Activated CD4-positive, alpha-beta T cell treated with anti-CD3 and anti-CD28 coated beads, Interleukin-2, amount 10 ng/mL, durations not matched to agents 24 days and 14 days (primary cell): ENCODE measurements at regions of chr6 and their contacts with region 1.

Region 1: GRCh38 chr6:118283766-118284165 is 264.3 kb upstream of the PLN start:
- DNase-seq: peak; percentile 83
- H3K4me3 Mint-ChIP-seq: no peak overlapping the region
- H3K27ac Mint-ChIP-seq: no peak overlapping the region
- H3K4me1 Mint-ChIP-seq: peaks cover 2% of the 10 kb centered on the region
- H3K27me3 Mint-ChIP-seq: peaks cover 29% of the 10 kb centered on the region

Region 2: DNA sequence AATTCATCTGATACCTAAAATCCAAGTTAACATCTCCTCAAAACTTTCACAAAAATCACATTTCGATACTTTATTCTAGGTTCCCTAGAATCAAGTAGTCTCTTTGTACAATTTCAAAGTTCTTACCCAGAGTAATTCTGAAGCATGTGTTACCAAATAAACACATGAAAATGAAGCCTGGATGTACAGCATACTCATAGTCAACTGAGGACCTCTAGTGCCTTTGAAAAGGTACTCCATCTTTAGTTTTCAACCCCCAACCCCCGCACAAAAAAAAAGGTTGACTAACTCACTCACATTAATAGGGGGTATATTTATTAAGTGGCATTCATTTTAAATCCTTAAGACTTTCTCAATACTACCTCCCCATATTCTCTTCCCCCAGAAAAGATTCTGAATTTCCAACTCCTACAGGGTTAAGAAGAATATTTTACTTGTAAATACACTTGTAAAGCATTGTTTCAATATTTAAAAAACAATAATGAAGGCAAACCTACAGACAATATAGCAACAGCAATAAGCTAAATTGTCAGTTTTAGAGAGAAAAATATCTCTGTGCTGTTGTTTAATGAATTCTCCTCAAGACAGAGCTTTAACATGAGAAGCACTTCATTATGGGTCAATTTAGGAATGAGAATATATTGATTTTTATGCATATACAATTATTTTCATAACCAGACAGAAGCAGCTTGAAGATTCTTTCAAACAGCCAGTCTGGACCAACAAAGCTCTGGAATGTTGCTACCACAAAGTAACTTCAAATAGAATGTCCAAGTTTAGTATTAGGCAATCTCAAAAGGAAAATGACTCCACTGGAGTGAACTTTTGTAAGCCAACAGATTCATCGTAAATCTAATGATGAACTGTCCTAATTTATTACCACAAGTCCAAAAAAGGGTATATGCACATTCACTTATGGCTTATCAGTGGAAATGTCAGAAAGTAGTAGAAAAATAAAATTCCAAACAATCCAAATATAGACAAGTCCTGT is 267.6 kb after region 1 on chr6:
- intact Hi-C with region 1: loop called (anchors 1 kb)
- DNase-seq: peak; percentile 72
- H3K4me3 Mint-ChIP-seq: no peak overlapping the region
- H3K27ac Mint-ChIP-seq: peak overlapping the region; percentile 15
- H3K4me1 Mint-ChIP-seq: peaks cover 5% of the 10 kb centered on the region
- H3K27me3 Mint-ChIP-seq: no peaks in the 10 kb centered on the region

Region 3: DNA sequence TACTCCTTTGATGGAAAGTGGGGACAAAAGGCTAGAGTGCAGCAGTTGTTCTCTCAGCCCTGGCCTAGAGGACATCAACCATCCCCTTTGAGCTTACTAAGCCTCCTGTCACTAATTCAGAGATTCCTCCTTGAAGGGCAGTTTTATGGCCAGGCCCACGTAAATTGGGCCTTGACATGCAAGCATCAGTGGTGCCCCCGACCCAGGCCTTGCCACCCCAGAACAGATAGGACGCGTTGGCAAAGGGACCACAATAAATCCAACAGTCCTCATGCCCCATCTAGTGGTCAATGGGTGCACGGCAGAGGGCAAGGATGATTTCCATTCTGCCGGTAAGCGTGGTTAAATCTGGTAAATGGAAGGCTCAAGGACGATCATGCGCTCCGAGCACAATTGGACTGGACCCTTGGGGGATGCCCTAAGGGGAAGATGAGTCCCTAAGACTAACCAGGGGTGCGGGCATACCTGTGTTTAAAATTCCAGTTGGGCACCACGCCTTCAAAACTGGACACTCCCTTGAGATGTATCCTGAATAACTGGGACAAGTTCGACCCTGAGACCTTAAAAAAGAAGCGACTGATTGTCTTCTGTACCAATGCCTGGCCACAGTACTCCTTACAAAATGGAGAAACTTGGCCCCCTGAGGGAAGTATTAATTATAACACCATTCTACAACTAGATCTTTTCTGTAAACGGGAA is 335.1 kb after region 1 on chr6:
- intact Hi-C with region 1: loop called (anchors 2 kb)
- DNase-seq: peak; percentile 86
- H3K4me3 Mint-ChIP-seq: no peak overlapping the region
- H3K27ac Mint-ChIP-seq: peak overlapping the region; percentile 9
- H3K4me1 Mint-ChIP-seq: peaks cover 28% of the 10 kb centered on the region
- H3K27me3 Mint-ChIP-seq: no peaks in the 10 kb centered on the region

Region 4: DNA sequence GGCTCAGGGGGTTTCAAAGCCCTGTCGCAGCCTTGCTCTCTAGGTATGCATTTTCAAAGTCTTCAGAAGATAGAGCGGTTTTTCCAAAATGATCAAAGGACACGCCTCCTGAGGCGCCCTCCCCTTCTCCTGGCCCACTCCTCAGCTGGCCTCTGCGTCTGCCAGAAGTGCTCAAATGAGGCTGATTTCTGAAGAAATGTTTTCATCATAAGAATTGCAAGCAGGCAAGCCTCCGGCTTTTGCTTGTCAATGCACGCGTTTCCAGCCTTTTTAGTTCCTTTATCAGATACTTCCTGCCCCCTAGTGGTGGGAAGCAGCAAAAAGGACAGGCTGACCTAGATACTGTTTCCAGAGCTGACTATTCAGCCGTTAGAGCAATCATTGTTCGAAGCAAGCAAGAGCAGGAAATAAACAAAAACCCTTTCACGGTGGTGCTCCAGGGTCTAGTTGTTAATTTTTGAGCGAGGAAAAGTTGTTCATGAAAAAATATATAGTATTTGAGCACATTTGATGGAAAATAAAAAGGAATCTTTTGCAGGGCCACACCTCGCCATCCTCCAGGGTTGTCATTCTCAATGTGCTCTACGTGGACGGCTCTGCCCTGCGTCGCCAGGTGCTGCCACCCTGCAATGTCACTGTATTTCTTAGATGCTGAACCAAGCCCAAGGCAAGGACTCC is 516.8 kb after region 1 on chr6:
- intact Hi-C with region 1: loop called (anchors 1 kb)
- DNase-seq: peak; percentile 95
- H3K4me3 Mint-ChIP-seq: peak overlapping the region; percentile 60
- H3K27ac Mint-ChIP-seq: peak overlapping the region; percentile 51
- H3K4me1 Mint-ChIP-seq: peaks cover 30% of the 10 kb centered on the region
- H3K27me3 Mint-ChIP-seq: no peaks in the 10 kb centered on the region

Region 5: GRCh38 chr6:119110601-119111548 is 827.1 kb after region 1 on chr6:
- intact Hi-C with region 1: loop called (anchors 1 kb)
- DNase-seq: peak; percentile 89
- H3K4me3 Mint-ChIP-seq: no peak overlapping the region
- H3K27ac Mint-ChIP-seq: no peak overlapping the region
- H3K4me1 Mint-ChIP-seq: peaks cover 12% of the 10 kb centered on the region
- H3K27me3 Mint-ChIP-seq: no peaks in the 10 kb centered on the region